Prostate gland (tissue), 2 donors: ENCODE measurements at regions of chr15 and their contacts with region 1.

Region 1: DNA sequence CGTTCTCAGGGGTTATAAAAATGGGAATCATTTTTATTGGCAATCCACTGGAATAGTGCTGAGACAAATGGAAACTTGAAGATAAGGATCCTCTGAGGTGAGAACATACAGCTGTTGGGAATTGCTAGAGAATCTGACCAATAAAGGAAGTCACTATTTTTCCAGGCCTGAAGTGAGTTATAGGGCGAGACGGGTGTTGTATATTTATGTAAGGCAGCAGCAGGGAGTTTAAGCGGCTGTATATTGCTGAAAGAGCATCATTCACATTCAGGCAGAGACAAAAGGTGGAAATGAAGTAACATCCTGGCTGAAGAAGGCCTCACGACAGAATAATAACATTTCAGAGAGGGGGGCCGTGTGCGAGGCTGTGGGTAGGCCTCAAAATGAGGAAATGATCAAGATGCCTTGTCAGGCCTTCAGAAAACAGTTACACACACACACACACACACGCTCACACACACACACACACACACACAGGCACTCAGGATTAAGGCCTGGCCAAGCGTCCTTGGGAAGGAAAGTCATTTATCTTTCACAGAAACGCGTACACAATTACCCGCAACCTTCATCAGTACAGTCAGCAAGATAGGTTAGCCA is 964.9 kb upstream of the NR2F2 start:
- DNase-seq: no peak
- H3K4me3 ChIP-seq: no peak overlapping the region
- H3K27ac ChIP-seq: peak overlapping the region; percentile 4 to 33
- H3K4me1 ChIP-seq: no peaks in the 10 kb centered on the region
- H3K27me3 ChIP-seq: no peaks in the 10 kb centered on the region
- CTCF ChIP-seq: no peak
- POLR2A ChIP-seq: no peak

Region 2: DNA sequence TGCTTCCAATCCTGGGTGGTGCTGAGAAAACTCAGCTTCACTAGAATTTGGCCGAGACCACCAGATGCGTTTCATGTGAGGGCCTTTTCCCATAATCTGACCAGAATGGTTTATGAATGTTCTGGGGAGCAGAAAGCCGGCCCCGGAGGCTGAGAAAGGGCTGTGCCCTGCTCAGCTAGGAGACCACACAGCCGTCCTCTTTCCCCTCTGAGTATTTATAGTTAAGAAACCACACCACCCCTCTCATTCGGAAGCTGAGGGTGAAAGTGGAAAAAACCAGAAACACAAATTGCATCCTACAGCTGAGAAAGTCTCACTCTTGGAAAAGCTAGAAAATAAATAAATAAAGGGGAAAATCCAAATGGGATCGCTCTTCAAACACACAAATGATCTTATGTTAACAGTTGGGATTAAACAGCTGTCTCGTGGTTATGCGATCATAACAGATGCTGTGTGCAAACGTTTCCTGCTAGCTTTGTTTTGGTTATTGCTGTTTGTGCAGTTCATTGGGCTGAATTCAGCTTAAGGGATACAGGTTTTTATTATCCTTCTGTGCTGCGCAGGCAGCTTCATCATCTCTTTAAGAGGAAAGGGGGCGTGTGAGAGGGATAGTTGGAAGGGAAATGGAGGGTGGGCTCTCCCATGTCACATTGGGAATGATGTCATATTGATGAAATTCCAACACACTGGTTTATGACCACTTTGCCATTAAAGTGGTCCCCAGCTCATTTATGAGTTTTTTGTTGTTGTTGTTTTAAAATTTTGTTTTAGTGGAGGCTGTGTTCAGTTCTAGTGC is 61.3 kb before region 1 on chr15:
- intact Hi-C with region 1: loop called (anchors 10 kb)
- DNase-seq: no peak
- H3K4me3 ChIP-seq: no peak overlapping the region
- H3K27ac ChIP-seq: peak overlapping the region; percentile 43 to 48
- H3K4me1 ChIP-seq: no peaks in the 10 kb centered on the region
- H3K27me3 ChIP-seq: no peaks in the 10 kb centered on the region
- CTCF ChIP-seq: no peak
- POLR2A ChIP-seq: no peak